ENCODE measurements at regions of chr7 and their contacts with region 1.

Region 1: DNA sequence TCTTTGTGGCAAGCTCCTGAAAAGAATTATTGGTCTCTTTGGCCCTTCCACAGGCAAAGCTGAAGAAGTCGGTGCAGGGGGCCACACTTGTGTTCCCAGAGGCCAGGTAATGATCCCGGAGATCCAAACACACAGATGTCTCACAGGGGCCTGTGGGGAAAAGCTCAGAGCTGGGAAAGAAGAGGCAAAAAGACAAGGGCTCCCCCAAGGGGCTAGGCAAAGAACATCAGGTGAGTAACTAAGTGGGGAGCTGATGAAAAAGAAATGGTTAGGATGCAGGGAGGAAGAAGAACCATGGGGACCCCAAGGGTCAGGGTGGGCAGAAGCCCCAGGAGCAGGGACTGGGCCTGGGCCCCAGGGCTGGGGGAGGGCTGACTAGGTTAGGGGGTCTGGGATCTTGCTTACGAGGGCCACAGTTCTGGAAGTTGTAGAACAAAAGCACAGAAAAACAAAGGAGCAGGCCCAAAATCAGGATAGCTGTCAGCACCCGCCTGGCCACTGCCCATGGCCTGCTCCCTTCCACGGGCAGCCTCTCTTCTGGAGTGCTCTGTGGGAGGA is 1.1 kb downstream of the KEL start:
- DNase-seq: no peak
- H3K4me3 ChIP-seq: no peak overlapping the region
- H3K27ac ChIP-seq: no peak overlapping the region
- H3K4me1 ChIP-seq: peaks cover 26% of the 10 kb centered on the region
- H3K27me3 ChIP-seq: no peaks in the 10 kb centered on the region
- CTCF ChIP-seq: peak; percentile 60

Region 2: GRCh38 chr7:142853739-142854371 is 107.2 kb before region 1 on chr7:
- CTCF ChIA-PET with region 1: no interaction called
- POLR2A ChIA-PET with region 1: no interaction called
- intact Hi-C with region 1: loop called (anchors 1 kb)
- DNase-seq: peak; percentile 78 to 85
- H3K4me3 ChIP-seq: peak overlapping the region; percentile 95
- H3K27ac ChIP-seq: peak overlapping the region; percentile 83
- H3K4me1 ChIP-seq: peaks cover 40% of the 10 kb centered on the region
- H3K27me3 ChIP-seq: no peaks in the 10 kb centered on the region
- CTCF ChIP-seq: peak; percentile 92

Region 3: DNA sequence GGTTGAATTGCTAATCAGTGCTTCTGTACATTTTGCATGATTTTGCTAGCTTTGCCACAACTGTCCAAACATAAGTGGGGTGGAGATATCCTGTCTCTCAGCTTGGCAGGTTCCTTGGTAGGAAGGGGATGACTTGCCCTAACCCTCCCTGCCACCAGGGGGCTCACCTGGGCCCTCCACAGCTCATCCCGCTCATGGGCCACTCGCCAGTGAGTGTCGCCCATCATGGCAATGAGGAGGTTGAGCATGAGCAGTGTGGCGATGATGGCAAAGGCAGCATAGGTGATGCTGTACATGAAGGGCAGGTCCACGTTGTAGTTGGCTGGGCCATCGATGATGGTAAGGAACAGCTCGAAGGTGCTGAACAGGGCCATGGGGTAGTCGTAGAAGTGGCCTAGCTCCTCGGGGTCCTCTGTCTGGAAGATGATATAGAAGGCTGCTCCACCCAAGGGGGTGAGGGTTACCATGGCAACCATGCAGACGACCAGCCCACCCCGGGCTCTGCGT is 87.7 kb before region 1 on chr7:
- CTCF ChIA-PET with region 1: interaction called, 14 read pairs
- POLR2A ChIA-PET with region 1: no interaction called
- intact Hi-C with region 1: no loop called
- DNase-seq: no peak
- H3K4me3 ChIP-seq: no peak overlapping the region
- H3K27ac ChIP-seq: no peak overlapping the region
- H3K4me1 ChIP-seq: no peaks in the 10 kb centered on the region
- H3K27me3 ChIP-seq: no peaks in the 10 kb centered on the region
- CTCF ChIP-seq: peak; percentile 78

Region 4: GRCh38 chr7:142880876-142881505 is 80.0 kb before region 1 on chr7:
- CTCF ChIA-PET with region 1: interaction called, 8 read pairs
- POLR2A ChIA-PET with region 1: interaction called, 5 read pairs
- intact Hi-C with region 1: loop called (anchors 1 kb)
- DNase-seq: peak in 1 of 2 experiments; percentile 46
- H3K4me3 ChIP-seq: no peak overlapping the region
- H3K27ac ChIP-seq: no peak overlapping the region
- H3K4me1 ChIP-seq: peaks cover 33% of the 10 kb centered on the region
- H3K27me3 ChIP-seq: no peaks in the 10 kb centered on the region
- CTCF ChIP-seq: peak; percentile 91

Region 5: GRCh38 chr7:142898377-142899170 is 62.5 kb before region 1 on chr7:
- CTCF ChIA-PET with region 1: interaction called, 8 read pairs
- POLR2A ChIA-PET with region 1: interaction called, 15 read pairs
- intact Hi-C with region 1: no loop called
- DNase-seq: peak; percentile 66 to 68
- H3K4me3 ChIP-seq: no peak overlapping the region
- H3K27ac ChIP-seq: no peak overlapping the region
- H3K4me1 ChIP-seq: peaks cover 28% of the 10 kb centered on the region
- H3K27me3 ChIP-seq: no peaks in the 10 kb centered on the region
- CTCF ChIP-seq: no peak

Region 6: GRCh38 chr7:142910031-142910433 is 51.0 kb before region 1 on chr7:
- CTCF ChIA-PET with region 1: interaction called, 4 read pairs
- POLR2A ChIA-PET with region 1: no interaction called
- intact Hi-C with region 1: loop called (anchors 2 kb)
- DNase-seq: peak in 1 of 2 experiments; percentile 87
- H3K4me3 ChIP-seq: no peak overlapping the region
- H3K27ac ChIP-seq: peak overlapping the region; percentile 55
- H3K4me1 ChIP-seq: peaks cover 37% of the 10 kb centered on the region
- H3K27me3 ChIP-seq: no peaks in the 10 kb centered on the region
- CTCF ChIP-seq: no peak

Region 7: DNA sequence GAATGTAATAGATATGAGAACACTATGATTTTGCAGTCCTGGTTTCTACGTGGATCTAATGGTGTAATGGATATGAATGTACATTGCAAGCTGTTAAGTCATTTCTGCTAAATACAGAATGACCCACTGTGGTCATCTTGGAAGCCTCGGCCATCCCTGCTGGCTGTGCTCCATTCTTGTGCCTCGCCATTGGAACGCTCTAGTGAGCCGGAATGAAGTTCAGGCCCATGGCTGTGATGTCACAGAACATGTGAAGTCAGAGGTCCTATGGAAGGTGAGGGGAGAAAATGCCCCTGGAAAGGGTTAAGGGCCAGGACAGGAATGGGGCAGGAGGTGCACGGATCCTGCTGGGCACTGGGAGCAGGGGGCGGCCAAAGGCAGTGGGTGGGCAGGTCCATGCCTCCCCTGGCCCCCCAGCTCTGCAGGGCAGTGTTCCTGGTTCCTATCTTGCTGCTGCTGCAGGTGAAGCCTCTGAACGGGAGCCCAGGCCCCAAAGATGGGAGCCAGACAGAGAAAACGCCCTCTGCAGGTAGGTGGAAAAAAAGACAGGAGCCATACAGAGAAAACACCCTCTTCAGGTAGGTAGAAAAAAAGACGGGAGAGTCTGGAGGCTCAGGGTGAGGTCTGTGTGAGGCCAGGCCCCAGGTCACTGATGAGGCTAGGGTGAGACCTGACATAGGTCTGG is 21.7 kb before region 1 on chr7 and contains the start of gene LLCFC1:
- CTCF ChIA-PET with region 1: no interaction called
- POLR2A ChIA-PET with region 1: no interaction called
- intact Hi-C with region 1: no loop called
- DNase-seq: peak; percentile 44 to 54
- H3K4me3 ChIP-seq: no peak within 1 kb of the TSS
- H3K27ac ChIP-seq: no peak within 1 kb of the TSS
- H3K4me1 ChIP-seq: no peaks in the 10 kb centered on the region
- H3K27me3 ChIP-seq: no peaks in the 10 kb centered on the region
- CTCF ChIP-seq: peak; percentile 70
- total RNA-seq, gene LLCFC1: not detected in 2 replicates

Region 8: DNA sequence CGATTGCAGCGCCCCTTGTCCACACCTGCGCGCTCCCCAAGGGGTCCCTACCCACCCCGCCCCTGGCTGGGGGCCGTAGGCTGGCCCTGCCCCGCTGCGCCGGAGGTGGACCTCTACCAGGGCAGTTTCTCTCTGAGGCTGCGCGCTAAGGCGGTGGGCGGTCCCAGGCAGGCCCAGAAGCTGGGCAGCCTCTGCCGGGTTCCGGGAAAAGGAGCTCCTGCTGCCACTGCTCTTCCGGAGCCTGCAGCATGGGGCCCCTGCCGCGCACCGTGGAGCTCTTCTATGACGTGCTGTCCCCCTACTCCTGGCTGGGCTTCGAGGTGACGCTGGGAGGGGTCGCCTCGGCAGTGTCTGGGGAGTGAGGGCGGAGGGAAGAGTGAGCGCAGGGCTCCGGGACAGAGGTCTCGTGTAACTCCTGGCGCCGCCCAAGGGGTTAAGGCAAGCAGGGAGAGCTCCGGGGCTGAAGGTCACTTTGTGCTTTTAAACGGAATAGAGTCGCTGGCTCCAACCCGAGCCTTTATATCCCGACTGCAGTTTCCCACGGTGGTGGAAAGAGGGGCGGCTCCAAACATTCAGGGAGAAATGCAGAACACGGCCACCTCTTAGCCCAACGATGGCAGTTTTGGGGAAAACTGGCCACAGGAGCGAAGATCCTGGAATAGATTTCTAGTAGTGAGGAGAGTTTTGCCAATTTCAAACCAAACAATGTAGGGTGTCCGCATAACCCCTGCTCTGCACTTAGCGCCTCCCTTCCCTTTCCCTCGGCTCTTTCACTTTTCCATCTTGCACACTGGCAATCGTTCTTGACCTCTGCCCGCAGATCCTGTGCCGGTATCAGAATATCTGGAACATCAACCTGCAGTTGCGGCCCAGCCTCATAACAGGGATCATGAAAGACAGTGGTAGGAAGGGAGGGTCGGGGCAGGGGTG is 302.5 kb after region 1 on chr7 and contains the start of gene GSTK1:
- CTCF ChIA-PET with region 1: no interaction called
- POLR2A ChIA-PET with region 1: interaction called, 36 read pairs
- intact Hi-C with region 1: no loop called
- DNase-seq: peak; percentile 68 to 81
- H3K4me3 ChIP-seq: peak within 1 kb of the TSS; percentile 90
- H3K27ac ChIP-seq: peak within 1 kb of the TSS; percentile 36
- H3K4me1 ChIP-seq: peaks cover 48% of the 10 kb centered on the region
- H3K27me3 ChIP-seq: no peaks in the 10 kb centered on the region
- CTCF ChIP-seq: no peak
- total RNA-seq, gene GSTK1: 239 and 244 TPM in 2 replicates